ENCODE measurements at regions of chr7 and their contacts with region 1.

Region 1: GRCh38 chr7:100132697-100133151 is 6.0 kb downstream of the MBLAC1 start:
- DNase-seq: peak; percentile 74
- ATAC-seq: peak; percentile 82
- H3K4me3 Mint-ChIP-seq: no peak overlapping the region
- H3K27ac Mint-ChIP-seq: peak overlapping the region; percentile 61; the same call in 1 of the 2 replicates
- H3K4me1 Mint-ChIP-seq: peaks cover 7% of the 10 kb centered on the region
- H3K27me3 Mint-ChIP-seq: peaks cover 15% of the 10 kb centered on the region
- CTCF ChIP-seq: peak; percentile 80

Region 2: GRCh38 chr7:99171731-99172130 is 961.0 kb before region 1 on chr7:
- CTCF ChIA-PET with region 1: no interaction called
- POLR2A ChIA-PET with region 1: no interaction called
- DNase-seq: no peak
- ATAC-seq: no peak
- H3K4me3 Mint-ChIP-seq: no peak overlapping the region
- H3K27ac Mint-ChIP-seq: no peak overlapping the region
- H3K4me1 Mint-ChIP-seq: no peaks in the 10 kb centered on the region
- H3K27me3 Mint-ChIP-seq: no peaks in the 10 kb centered on the region
- CTCF ChIP-seq: no peak

Region 3: DNA sequence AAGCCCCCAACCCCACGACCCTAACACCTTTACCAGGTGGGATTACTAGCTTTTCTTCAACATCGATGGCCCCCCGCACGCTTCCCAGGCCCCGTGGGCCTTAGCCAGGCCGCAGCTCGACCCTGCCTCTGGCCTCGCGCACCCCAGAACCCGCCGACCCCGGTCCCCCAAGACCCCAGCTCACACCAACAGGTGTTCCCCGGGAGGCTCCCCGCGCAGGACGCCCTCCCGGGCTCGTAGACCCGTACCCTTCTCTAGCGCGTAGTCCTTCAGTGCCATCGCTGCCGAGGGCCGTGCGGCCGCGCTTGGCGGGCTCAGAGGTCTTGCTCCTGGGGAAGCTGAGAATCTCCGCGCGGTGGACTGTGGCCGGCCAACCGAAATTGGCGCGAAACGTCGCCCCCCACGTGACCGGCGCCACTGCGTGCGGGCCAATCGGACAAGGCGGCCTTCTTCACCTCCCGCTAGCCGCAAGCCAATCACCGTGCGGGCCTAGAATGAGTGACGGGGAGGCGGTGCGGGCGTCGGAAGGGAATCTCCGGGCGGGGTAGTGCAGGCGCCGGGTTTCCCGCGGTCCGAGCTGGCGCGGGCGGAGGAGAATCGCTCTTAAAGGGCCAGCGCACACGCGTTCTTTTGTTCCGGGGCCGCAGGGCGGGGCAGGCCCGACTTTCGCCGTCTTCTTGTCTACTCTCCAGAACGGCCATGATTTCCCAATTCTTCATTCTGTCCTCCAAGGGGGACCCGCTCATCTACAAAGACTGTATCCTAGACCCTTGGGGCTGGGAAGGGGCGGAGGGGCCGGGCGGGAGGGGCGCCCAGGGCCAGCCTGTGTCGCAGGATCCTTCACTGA is 31.5 kb before region 1 on chr7 and contains the starts of genes AP4M1 and MCM7:
- CTCF ChIA-PET with region 1: interaction called, 41 read pairs
- POLR2A ChIA-PET with region 1: interaction called, 11 read pairs
- DNase-seq: peak; percentile 99
- ATAC-seq: peak; percentile 87
- H3K4me3 Mint-ChIP-seq: peak within 1 kb of the TSS; percentile 91
- H3K27ac Mint-ChIP-seq: peak within 1 kb of the TSS; percentile 99
- H3K4me1 Mint-ChIP-seq: peaks cover 24% of the 10 kb centered on the region
- H3K27me3 Mint-ChIP-seq: no peaks in the 10 kb centered on the region
- CTCF ChIP-seq: no peak
- total RNA-seq, gene AP4M1: 16.9 to 18.0 TPM (median 17.4 TPM) in 3 replicates
- total RNA-seq, gene MCM7: 306 to 351 TPM (median 315 TPM) in 3 replicates

Region 4: DNA sequence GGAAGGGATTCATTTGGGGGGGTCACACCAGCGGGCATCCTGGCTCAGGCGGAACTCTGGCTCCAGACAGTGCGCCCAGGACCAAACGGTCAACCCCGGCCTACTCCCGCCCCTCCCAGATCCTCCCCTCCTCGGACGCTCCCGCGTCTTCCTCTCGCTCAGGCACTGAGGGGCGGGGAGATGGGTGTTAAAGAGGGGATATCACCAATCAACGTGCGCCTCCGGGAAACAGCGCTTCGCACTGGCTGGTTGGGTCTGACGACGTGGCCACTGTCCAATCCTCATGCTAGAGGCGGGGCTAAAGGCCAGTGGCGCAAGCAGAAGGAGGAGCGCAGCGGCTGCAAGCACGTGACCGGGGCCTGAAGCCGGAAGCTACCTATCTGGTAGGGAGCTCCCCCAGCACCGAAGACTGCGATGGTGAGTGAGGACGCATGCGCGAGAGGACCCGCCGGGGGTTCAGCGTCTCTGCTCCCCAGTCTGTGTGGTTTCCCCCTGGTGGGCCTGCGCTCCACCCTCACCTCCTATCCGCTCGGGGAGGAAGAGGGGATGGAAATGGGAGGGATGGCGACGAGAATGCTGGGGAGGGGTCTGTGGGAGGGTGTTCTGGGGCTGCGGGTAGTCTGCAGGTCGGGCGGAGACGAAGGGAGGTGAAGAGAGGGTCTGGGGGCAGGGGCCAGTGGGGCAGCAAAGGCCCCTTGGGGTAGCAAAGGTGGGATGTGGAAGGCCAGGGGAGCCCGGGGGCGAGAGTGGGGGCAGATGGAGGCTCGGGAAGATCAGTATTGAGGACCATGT is 16.0 kb after region 1 on chr7 and contains the start of gene LAMTOR4:
- CTCF ChIA-PET with region 1: interaction called, 49 read pairs
- POLR2A ChIA-PET with region 1: interaction called, 3 read pairs
- DNase-seq: peak; percentile 99
- ATAC-seq: peak; percentile 98
- H3K4me3 Mint-ChIP-seq: peak within 1 kb of the TSS; percentile 99
- H3K27ac Mint-ChIP-seq: peak within 1 kb of the TSS; percentile 99
- H3K4me1 Mint-ChIP-seq: peaks cover 20% of the 10 kb centered on the region
- H3K27me3 Mint-ChIP-seq: peaks cover 3% of the 10 kb centered on the region; the same call in 1 of the 2 replicates
- CTCF ChIP-seq: no peak
- total RNA-seq, gene LAMTOR4: 199 to 235 TPM (median 227 TPM) in 3 replicates

Region 5: GRCh38 chr7:100177045-100178001 is 44.6 kb after region 1 on chr7 and contains the starts of genes GPC2 and STAG3:
- CTCF ChIA-PET with region 1: interaction called, 15 read pairs
- POLR2A ChIA-PET with region 1: interaction called, 3 read pairs
- DNase-seq: peak; percentile 100
- ATAC-seq: peak; percentile 95
- H3K4me3 Mint-ChIP-seq: peak within 1 kb of the TSS; percentile 92
- H3K27ac Mint-ChIP-seq: no peak within 1 kb of the TSS
- H3K4me1 Mint-ChIP-seq: peaks cover 29% of the 10 kb centered on the region
- H3K27me3 Mint-ChIP-seq: peaks cover 51% of the 10 kb centered on the region
- CTCF ChIP-seq: no peak
- total RNA-seq, gene GPC2: 52.1 to 63.9 TPM (median 63.0 TPM) in 3 replicates
- total RNA-seq, gene STAG3: 5.2 to 7.6 TPM (median 5.5 TPM) in 3 replicates

Region 6: DNA sequence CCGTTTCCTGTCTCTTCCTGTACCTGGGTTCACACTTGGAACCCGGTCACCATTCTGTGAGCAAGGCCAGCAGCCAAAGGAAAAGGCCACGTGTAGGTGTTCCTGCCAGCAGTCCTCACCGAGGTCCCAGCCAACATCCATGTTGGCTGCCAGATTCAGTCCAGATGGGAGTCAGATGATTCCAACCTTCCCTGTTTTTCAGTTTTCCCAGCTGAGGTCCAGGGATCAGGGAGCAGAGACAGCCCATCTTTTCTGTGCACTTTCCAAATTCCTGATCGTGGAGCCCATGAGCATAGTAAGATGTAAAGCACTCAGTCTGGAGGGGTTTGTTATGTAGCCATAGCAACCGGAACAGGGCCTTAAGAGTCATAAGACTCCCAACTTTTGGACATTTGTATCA is 83.2 kb after region 1 on chr7:
- CTCF ChIA-PET with region 1: interaction called, 44 read pairs
- POLR2A ChIA-PET with region 1: interaction called, 4 read pairs
- DNase-seq: no peak
- ATAC-seq: no peak
- H3K4me3 Mint-ChIP-seq: no peak overlapping the region
- H3K27ac Mint-ChIP-seq: no peak overlapping the region
- H3K4me1 Mint-ChIP-seq: peaks cover 3% of the 10 kb centered on the region; the same call in 1 of the 2 replicates
- H3K27me3 Mint-ChIP-seq: peaks cover 47% of the 10 kb centered on the region
- CTCF ChIP-seq: no peak